PC-9 (cell line): ENCODE measurements at regions of chr19 and their contacts with region 1.

Region 1: GRCh38 chr19:11346092-11346940 is at the starts of genes CCDC159 and TMEM205:
- DNase-seq: peak; percentile 98 to 99
- H3K4me3 ChIP-seq: peak within 1 kb of the TSS; percentile 90
- H3K27ac ChIP-seq: peak within 1 kb of the TSS; percentile 67
- H3K4me1 ChIP-seq: peaks cover 36% of the 10 kb centered on the region
- H3K27me3 ChIP-seq: no peaks in the 10 kb centered on the region
- CTCF ChIP-seq: no peak
- total RNA-seq, gene CCDC159: 9.4 and 13.7 TPM in 2 replicates
- total RNA-seq, gene TMEM205: 80.3 and 90.6 TPM in 2 replicates

Region 2: GRCh38 chr19:11018179-11018578 is 328.1 kb before region 1 on chr19:
- CTCF ChIA-PET with region 1: no interaction called
- POLR2A ChIA-PET with region 1: no interaction called
- intact Hi-C with region 1: no loop called
- DNase-seq: peak; percentile 47 to 86
- H3K4me3 ChIP-seq: no peak overlapping the region
- H3K27ac ChIP-seq: no peak overlapping the region
- H3K4me1 ChIP-seq: no peaks in the 10 kb centered on the region
- H3K27me3 ChIP-seq: no peaks in the 10 kb centered on the region
- CTCF ChIP-seq: no peak

Region 3: GRCh38 chr19:11324079-11324661 is 22.1 kb before region 1 on chr19:
- CTCF ChIA-PET with region 1: interaction called, 4 read pairs
- POLR2A ChIA-PET with region 1: no interaction called
- intact Hi-C with region 1: loop called (anchors 2 kb)
- DNase-seq: peak; percentile 83 to 98
- H3K4me3 ChIP-seq: peak overlapping the region; percentile 25; the same call in 1 of the 2 replicates
- H3K27ac ChIP-seq: peak overlapping the region; percentile 73
- H3K4me1 ChIP-seq: peaks cover 43% of the 10 kb centered on the region
- H3K27me3 ChIP-seq: no peaks in the 10 kb centered on the region
- CTCF ChIP-seq: no peak

Region 4: DNA sequence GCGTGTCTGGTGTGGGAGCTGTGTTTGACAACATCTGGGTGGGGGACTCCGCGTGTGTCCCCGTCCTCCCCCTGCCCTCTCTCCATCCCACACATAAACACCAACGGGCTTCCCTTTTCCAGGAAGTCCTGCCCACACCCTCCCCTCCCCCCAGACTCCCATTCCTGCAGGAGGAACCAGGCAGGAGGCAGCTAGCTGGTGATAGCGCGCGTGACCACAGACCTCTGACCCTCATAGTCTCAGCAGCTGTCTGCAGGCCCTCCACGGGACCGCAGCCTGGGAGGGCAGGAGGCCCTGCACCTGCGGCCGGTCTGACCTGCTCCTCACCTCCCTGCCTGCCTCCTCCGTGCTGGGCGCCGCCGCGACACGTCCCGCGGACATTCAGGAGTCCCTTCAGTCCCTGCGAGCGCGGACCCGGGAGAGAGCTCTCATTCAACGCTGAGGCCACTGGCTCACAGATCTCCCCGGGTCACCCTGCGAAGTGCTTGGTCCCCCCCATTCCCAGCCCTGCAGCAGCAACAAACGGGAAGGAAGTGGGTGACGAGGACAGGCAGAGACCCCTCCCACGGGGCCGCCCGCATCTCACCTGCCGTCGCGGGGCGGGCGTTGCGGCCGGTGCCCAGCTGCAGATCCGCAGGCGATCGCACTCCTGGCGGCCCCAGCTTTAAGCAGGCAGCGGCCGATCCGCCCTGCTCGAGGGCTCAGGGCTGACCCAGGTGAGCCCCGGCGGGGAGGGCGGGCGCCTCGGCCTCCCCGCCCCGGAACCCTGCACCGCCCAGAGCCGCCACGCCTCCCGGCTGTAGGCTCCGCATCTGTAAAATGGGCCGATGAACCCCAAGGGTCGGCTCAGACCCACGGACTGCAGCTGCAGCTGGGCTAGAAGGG is 232.2 kb after region 1 on chr19:
- CTCF ChIA-PET with region 1: no interaction called
- POLR2A ChIA-PET with region 1: no interaction called
- intact Hi-C with region 1: no loop called
- DNase-seq: peak in 1 of 2 experiments; percentile 17
- H3K4me3 ChIP-seq: no peak overlapping the region
- H3K27ac ChIP-seq: no peak overlapping the region
- H3K4me1 ChIP-seq: no peaks in the 10 kb centered on the region
- H3K27me3 ChIP-seq: no peaks in the 10 kb centered on the region
- CTCF ChIP-seq: no peak